Activated CD4-positive, alpha-beta memory T cell treated with anti-CD3 and anti-CD28 coated beads for 36 hours (primary cell): ENCODE measurements at regions of chr10 and their contacts with region 1.

Region 1: GRCh38 chr10:26969145-26969926 is 108.6 kb upstream of the ABI1 start:
- DNase-seq: peak; percentile 26
- H3K4me3 Mint-ChIP-seq: no peak overlapping the region
- H3K27ac Mint-ChIP-seq: peak overlapping the region; percentile 34
- H3K4me1 Mint-ChIP-seq: peaks cover 21% of the 10 kb centered on the region
- H3K27me3 Mint-ChIP-seq: no peaks in the 10 kb centered on the region

Region 2: DNA sequence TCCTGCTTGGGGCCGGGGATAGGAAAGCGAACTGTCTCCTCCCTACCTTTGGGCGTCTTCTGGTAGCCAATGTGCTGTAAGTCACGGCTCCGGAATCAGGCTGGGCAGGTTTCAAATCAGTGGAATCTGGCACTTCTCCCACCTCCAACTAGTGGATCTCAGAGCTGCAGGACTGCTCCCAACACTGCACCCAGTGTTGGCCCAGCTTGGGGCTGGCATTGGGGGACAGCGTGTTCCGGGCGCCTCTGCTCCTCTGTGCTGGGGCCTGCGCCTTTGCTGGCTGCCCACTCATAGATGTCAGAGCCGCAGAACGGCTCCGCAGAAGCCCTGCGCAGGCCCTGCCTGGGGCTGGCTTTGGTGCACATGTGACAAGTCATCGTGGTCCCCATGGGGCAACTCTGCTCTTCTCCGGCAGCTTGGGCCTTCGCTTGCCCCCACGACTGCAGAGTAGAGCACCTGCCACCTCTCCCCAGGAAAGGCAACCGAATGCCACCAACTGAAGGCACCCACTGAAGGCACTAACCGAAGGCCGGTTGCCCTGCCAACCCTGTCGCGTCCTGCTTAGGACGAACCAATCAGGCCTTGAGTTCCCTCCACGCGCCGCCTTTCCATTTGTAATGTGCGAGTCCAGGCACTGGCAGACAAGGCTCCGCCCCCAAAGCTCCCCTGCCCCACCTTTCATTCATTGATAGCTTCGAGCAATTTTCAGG is 23.1 kb before region 1 on chr10:
- CTCF ChIA-PET with region 1: no interaction called
- POLR2A ChIA-PET with region 1: no interaction called
- intact Hi-C with region 1: no loop called
- DNase-seq: no peak
- H3K4me3 Mint-ChIP-seq: no peak overlapping the region
- H3K27ac Mint-ChIP-seq: no peak overlapping the region
- H3K4me1 Mint-ChIP-seq: no peaks in the 10 kb centered on the region
- H3K27me3 Mint-ChIP-seq: peaks cover 10% of the 10 kb centered on the region

Region 3: DNA sequence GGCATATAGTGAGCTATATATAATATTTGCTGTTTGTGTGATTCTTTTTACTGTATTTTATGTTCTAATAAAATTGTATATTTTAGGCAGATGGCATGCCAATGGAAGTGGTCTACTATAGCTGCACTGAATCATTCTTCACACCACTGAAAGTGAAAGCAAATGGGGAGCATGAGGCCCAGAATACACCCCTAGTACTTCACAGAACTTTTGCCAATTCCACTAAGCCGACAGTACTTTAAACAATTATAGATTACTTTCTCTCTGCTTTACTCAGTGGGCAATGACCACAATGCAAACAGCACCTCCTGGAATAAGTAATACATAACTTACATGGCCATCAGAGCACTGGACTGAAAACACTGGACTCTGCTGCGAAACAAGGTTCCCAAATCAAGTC is 60.7 kb after region 1 on chr10:
- CTCF ChIA-PET with region 1: no interaction called
- POLR2A ChIA-PET with region 1: no interaction called
- intact Hi-C with region 1: loop called (anchors 10 kb)
- DNase-seq: no peak
- H3K4me3 Mint-ChIP-seq: no peak overlapping the region
- H3K27ac Mint-ChIP-seq: no peak overlapping the region
- H3K4me1 Mint-ChIP-seq: peaks cover 10% of the 10 kb centered on the region
- H3K27me3 Mint-ChIP-seq: no peaks in the 10 kb centered on the region

Region 4: GRCh38 chr10:27111277-27111676 is 141.9 kb after region 1 on chr10:
- CTCF ChIA-PET with region 1: no interaction called
- POLR2A ChIA-PET with region 1: no interaction called
- intact Hi-C with region 1: no loop called
- DNase-seq: no peak
- H3K4me3 Mint-ChIP-seq: no peak overlapping the region
- H3K27ac Mint-ChIP-seq: no peak overlapping the region
- H3K4me1 Mint-ChIP-seq: peaks cover under 1% of the 10 kb centered on the region
- H3K27me3 Mint-ChIP-seq: no peaks in the 10 kb centered on the region

Region 5: GRCh38 chr10:27857616-27858015 is 888.3 kb after region 1 on chr10:
- CTCF ChIA-PET with region 1: no interaction called
- POLR2A ChIA-PET with region 1: no interaction called
- intact Hi-C with region 1: no loop called
- DNase-seq: no peak
- H3K4me3 Mint-ChIP-seq: no peak overlapping the region
- H3K27ac Mint-ChIP-seq: no peak overlapping the region
- H3K4me1 Mint-ChIP-seq: no peaks in the 10 kb centered on the region
- H3K27me3 Mint-ChIP-seq: no peaks in the 10 kb centered on the region

Region 6: DNA sequence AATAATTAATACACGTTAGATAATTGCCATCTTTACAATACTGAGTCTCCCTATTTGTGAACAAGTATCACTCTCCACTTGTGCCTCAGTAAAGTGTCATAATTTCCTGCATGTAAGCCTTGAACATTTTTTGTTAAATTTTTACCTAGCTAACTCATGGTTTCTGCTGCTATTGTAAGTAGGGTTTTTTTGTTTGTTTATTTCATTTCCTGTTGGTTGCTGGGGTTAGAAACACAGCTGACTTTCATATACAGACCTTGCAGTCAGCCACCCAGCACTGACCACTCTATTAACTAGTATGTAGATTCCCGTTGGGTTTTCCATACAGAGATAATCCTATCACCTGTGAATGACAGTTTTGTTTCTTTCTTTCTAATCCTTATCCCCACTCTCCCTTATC is 1200.2 kb after region 1 on chr10:
- CTCF ChIA-PET with region 1: no interaction called
- POLR2A ChIA-PET with region 1: no interaction called
- intact Hi-C with region 1: no loop called
- DNase-seq: no peak
- H3K4me3 Mint-ChIP-seq: no peak overlapping the region
- H3K27ac Mint-ChIP-seq: no peak overlapping the region
- H3K4me1 Mint-ChIP-seq: peaks cover 15% of the 10 kb centered on the region
- H3K27me3 Mint-ChIP-seq: no peaks in the 10 kb centered on the region